ENCODE measurements at regions of chr15 and their contacts with region 1.

Region 1: DNA sequence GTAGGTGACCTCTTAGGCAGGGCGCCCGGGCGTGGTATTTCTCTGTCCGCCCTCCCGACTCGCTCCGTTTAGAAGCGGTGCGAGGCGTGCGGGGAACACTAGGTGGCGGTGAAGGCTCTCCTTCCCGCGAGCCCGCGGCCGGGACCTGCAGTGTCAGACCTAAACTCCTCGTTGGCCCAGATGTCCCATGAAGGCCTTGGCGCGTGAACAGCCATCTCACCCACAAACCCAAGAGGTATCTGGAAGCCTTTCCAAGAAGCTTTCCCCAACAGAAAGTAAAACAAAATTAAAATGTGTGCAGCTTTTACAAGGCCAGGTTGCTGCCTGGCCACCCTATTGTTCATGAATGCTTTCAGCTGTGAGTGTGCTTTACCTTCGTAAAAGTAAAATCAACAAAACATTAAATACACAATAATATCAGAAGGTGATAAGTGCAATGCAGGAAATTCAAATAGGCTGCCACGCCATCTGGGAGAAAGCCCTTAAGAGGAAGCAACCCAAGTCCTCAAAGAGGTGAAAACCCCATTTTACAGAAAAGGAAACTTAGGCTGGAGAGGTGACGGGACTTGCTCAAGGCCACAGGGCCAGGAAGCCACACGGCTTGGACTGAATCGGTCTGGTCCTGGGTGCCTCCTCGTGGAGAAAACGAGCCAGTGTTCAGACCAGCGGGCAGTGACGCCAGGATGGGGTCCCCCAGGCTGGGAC is 120.3 kb downstream of the ETFA start:
- DNase-seq: peak; percentile 57 to 94 (median 76)
- ATAC-seq: peak; percentile 97
- H3K4me3 ChIP-seq: no peak overlapping the region
- H3K27ac ChIP-seq: no peak overlapping the region
- H3K4me1 ChIP-seq: peaks cover 0 to 10% of the 10 kb centered on the region in 2 donors
- H3K27me3 ChIP-seq: peaks cover 0 to 66% of the 10 kb centered on the region in 2 donors
- CTCF ChIP-seq: peak; percentile 80 to 86

Region 2: DNA sequence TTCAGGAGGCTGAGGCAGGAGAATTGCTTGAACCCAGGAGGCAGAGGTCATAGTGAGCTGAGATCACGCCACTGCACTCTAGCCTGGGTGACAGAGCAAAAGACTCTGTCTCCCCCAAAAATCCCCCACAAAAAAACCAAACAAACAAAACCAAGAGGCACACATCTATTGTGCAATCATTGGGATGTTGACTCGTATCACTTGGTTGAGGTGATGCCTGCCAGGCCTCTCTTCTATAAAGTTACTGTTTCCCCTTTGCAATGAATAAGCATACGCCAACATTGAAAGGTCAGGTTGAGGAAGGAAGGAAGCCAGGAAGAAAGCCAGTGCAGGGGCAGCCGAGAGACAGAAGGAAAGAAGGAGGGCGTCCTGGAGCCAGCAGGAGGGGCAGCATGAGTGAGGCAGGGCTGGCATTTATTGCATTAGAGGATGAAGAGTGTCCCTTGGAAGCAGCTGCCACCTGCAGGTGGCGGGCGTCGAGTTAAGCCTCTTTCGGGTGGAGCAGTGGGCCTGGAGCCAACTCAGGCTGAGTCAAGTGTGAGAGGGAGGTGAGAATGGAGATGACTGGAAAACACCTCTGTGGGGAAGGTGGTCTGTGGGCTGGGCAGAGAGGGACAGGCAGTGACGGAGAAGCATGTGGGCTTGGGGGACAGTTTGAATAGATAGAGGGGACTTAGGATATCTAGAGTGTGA is 470.1 kb before region 1 on chr15:
- intact Hi-C with region 1: no loop called
- DNase-seq: peak in 3 of 4 donors; percentile 71 to 85 (median 75)
- ATAC-seq: peak; percentile 27
- H3K4me3 ChIP-seq: no peak overlapping the region
- H3K27ac ChIP-seq: no peak overlapping the region
- H3K4me1 ChIP-seq: peaks cover 4 to 14% of the 10 kb centered on the region in 2 donors
- H3K27me3 ChIP-seq: no peaks in the 10 kb centered on the region
- CTCF ChIP-seq: no peak

Region 3: DNA sequence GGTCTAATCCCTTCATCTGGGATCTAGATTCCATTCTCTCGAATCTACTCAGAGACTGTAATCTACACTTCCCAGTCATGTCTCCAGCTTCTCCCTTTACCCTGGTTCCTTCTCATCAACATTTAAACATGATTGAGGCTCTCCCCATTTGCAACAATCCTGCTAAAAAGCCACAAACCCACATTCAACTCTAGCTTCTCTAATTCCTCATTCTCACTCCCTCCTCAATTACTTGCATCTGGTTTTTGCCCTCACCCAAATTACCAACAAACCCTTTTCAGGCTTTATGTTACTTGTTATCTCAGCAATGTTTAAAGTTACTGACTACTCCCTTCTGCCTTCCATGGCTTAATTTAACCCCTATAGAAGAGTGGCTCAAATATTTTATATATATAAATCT is 108.8 kb after region 1 on chr15:
- intact Hi-C with region 1: no loop called
- DNase-seq: no peak
- ATAC-seq: no peak
- H3K4me3 ChIP-seq: no peak overlapping the region
- H3K27ac ChIP-seq: no peak overlapping the region
- H3K4me1 ChIP-seq: peaks cover 5 to 23% of the 10 kb centered on the region in 2 donors
- H3K27me3 ChIP-seq: no peaks in the 10 kb centered on the region
- CTCF ChIP-seq: no peak

Region 4: GRCh38 chr15:76327191-76328105 is 136.5 kb after region 1 on chr15:
- intact Hi-C with region 1: loop called in 1 of 2 experiments (anchors 5 kb)
- DNase-seq: no peak
- ATAC-seq: no peak
- H3K4me3 ChIP-seq: no peak overlapping the region
- H3K27ac ChIP-seq: no peak overlapping the region
- H3K4me1 ChIP-seq: no peaks in the 10 kb centered on the region
- H3K27me3 ChIP-seq: peaks cover 8 to 82% of the 10 kb centered on the region in 2 donors
- CTCF ChIP-seq: no peak

Measured in left lung (tissue), 14 donors.